Spleen (tissue), 13 donors: ENCODE measurements at regions of chr3 and their contacts with region 1.

Region 1: GRCh38 chr3:38521391-38521987 is 25.3 kb downstream of the EXOG start:
- DNase-seq: no peak
- H3K4me3 ChIP-seq: no peak overlapping the region
- H3K27ac ChIP-seq: no peak overlapping the region
- H3K4me1 ChIP-seq: peaks cover 0 to 20% (median 0%) of the 10 kb centered on the region in 6 donors
- H3K27me3 ChIP-seq: no peaks in the 10 kb centered on the region
- CTCF ChIP-seq: peak; percentile 69 to 90 (median 86)
- POLR2A ChIP-seq: no peak

Region 2: GRCh38 chr3:37887062-37887461 is 634.4 kb before region 1 on chr3:
- intact Hi-C with region 1: no loop called
- DNase-seq: no peak
- H3K4me3 ChIP-seq: no peak overlapping the region
- H3K27ac ChIP-seq: no peak overlapping the region
- H3K4me1 ChIP-seq: peaks cover 0 to 63% (median 10%) of the 10 kb centered on the region in 6 donors
- H3K27me3 ChIP-seq: no peaks in the 10 kb centered on the region
- CTCF ChIP-seq: no peak
- POLR2A ChIP-seq: no peak

Region 3: GRCh38 chr3:37974121-37975083 is 547.1 kb before region 1 on chr3:
- intact Hi-C with region 1: no loop called
- DNase-seq: peak; percentile 89
- H3K4me3 ChIP-seq: no peak overlapping the region
- H3K27ac ChIP-seq: peak overlapping the region in 1 of 8 donors; percentile 20
- H3K4me1 ChIP-seq: peaks cover 3 to 25% (median 13%) of the 10 kb centered on the region in 6 donors
- H3K27me3 ChIP-seq: no peaks in the 10 kb centered on the region
- CTCF ChIP-seq: peak; percentile 75 to 95 (median 89)
- POLR2A ChIP-seq: no peak

Region 4: DNA sequence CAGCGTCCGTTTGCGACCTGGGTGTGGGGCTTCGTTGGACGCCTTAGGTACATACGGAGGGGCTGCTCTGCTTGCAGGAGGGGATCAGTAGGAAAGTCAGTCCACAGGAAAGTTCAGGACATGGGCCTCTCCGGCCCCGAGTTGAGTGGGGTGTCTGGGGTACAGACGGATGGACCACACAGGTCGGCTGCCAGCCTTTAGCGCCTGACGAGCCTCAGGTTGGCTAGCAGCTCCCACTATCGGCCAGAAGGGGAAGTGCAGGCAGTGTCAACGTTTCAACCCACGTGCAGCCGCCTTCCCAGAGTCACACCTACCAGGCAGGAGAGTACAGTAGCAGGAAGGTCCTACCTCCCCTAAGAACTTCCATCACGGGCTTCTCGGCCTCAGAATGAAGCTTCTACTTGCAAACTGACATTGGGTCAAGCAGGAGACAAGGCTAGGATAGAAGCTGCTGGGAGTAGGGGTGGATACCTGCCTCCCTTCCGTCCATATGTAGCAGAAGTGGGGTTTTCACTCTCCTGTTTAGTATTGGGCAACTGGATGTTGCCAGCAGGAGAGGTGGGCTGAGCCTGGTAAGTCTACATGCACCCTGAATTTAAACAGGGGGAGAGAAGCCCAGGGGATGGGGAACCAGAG is 129.8 kb after region 1 on chr3:
- intact Hi-C with region 1: loop called (anchors 5 kb)
- DNase-seq: peak; percentile 87
- H3K4me3 ChIP-seq: peak overlapping the region in 1 of 8 donors; percentile 25
- H3K27ac ChIP-seq: no peak overlapping the region
- H3K4me1 ChIP-seq: peaks cover 0 to 35% (median 23%) of the 10 kb centered on the region in 6 donors
- H3K27me3 ChIP-seq: peaks cover 4 to 95% (median 33%) of the 10 kb centered on the region in 7 donors
- CTCF ChIP-seq: peak; percentile 72 to 96 (median 88)
- POLR2A ChIP-seq: no peak

Region 5: GRCh38 chr3:38707730-38708129 is 186.2 kb after region 1 on chr3:
- intact Hi-C with region 1: no loop called
- DNase-seq: no peak
- H3K4me3 ChIP-seq: no peak overlapping the region
- H3K27ac ChIP-seq: no peak overlapping the region
- H3K4me1 ChIP-seq: no peaks in the 10 kb centered on the region
- H3K27me3 ChIP-seq: peaks cover 0 to 16% (median 0%) of the 10 kb centered on the region in 7 donors
- CTCF ChIP-seq: no peak
- POLR2A ChIP-seq: no peak

Region 6: GRCh38 chr3:38843898-38844297 is 322.4 kb after region 1 on chr3:
- intact Hi-C with region 1: loop called (anchors 10 kb)
- DNase-seq: no peak
- H3K4me3 ChIP-seq: no peak overlapping the region
- H3K27ac ChIP-seq: no peak overlapping the region
- H3K4me1 ChIP-seq: no peaks in the 10 kb centered on the region
- H3K27me3 ChIP-seq: peaks cover 0 to 7% (median 0%) of the 10 kb centered on the region in 7 donors
- CTCF ChIP-seq: peak in 1 of 11 experiments; percentile 17
- POLR2A ChIP-seq: no peak